MCF 10A (cell line): ENCODE measurements at regions of chr20 and their contacts with region 1.

Region 1: DNA sequence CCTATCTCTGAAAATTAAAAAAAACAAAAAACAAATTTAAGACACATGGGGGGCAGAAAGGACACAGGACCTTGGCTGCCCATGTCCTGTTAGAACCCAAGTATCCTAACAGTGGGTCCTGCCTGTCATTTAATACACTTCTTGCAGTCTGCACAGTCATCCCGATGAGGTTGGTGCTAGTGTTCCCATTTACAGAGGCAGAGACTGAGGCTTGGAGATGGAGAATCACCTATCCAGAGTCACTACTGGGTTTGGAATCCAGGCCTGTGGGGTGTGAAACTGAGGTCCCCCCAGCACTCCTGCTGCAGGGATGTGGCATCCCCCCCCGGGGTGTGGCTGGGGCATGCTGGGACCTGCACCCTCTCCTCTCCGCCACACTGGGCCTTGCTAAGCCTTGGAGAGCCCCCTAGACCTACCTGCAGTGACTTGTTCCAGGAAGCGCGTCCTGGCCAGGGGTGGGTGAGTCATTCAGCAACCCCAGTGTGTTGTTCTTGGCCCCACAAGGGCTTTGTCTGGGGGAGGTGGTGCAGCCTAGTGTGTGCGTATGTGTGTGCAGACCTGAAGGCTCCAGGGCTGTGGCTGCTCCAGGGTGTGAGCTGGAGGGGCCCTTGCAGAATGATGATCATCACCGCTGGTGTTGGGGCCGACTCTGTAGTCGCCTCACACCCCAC is 49.7 kb downstream of the BCAS4 start:
- DNase-seq: peak; percentile 98
- H3K4me3 Mint-ChIP-seq: no peak overlapping the region
- H3K27ac Mint-ChIP-seq: peak overlapping the region; percentile 16
- H3K4me1 Mint-ChIP-seq: peaks cover 36% of the 10 kb centered on the region
- H3K27me3 Mint-ChIP-seq: no peaks in the 10 kb centered on the region
- CTCF ChIP-seq: no peak

Region 2: DNA sequence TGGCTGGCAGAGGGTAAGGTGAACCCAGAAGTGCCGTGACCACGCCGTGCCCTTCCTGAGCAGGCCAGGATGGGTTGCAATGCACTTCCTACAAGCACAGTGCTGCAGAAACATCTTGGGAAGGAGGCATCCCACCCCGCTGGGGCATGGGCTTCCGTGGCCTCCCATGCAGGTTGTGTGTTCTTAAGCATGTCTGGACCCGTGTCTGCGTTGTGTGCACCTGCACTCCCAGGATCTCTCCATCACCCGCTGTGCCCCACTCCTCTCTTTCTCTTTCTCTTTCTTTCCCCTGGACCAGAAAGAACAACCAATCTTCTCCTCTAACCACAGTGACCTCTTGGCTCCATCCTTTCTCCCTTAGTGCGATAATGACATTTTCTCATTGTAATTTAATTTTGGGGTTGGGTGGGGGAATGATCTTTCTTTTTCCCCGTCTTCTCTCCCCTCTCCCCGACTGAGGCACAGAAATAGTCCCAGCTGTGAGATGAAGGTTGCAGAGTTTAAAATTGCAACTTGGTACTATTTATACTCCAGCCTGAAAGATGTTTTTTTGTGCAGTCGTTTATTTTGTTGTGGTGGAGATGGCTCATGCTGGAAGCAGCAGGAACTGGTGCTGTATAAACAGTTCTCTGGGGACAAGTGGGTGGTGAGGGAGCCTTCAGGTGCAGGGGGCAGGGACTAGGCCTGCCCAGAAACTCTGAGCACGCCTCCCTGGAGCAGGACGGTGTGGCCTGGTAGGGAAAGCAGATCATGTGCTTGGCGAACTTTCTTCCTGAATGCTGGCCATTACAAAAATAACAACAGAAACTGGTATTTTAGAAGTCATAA is 29.2 kb before region 1 on chr20:
- CTCF ChIA-PET with region 1: interaction called, 15 read pairs
- POLR2A ChIA-PET with region 1: interaction called, 13 read pairs
- intact Hi-C with region 1: no loop called
- DNase-seq: no peak
- H3K4me3 Mint-ChIP-seq: no peak overlapping the region
- H3K27ac Mint-ChIP-seq: peak overlapping the region; percentile 52
- H3K4me1 Mint-ChIP-seq: peaks cover 16% of the 10 kb centered on the region
- H3K27me3 Mint-ChIP-seq: no peaks in the 10 kb centered on the region
- CTCF ChIP-seq: no peak

Region 3: DNA sequence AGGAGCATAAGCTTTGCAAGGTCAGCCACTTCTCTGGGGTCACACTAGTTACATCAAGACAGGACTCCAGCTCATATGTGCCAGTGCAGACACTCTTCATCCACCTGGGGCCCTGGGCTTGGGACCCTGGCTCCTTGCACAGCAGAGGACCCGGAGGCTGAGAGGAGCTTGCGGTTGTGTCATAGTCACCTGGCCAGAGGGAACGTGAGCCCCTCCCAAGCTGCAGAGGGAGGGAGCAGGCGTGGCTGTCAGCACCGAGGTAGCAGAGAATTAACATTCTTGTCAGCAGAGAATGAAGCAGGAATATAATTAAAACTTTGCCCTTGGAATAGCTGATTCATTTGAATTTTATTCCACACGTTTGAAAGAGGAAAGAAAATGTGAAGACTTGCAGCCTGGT is 12.9 kb before region 1 on chr20:
- CTCF ChIA-PET with region 1: interaction called, 5 read pairs
- POLR2A ChIA-PET with region 1: interaction called, 89 read pairs
- intact Hi-C with region 1: no loop called
- DNase-seq: no peak
- H3K4me3 Mint-ChIP-seq: no peak overlapping the region
- H3K27ac Mint-ChIP-seq: no peak overlapping the region
- H3K4me1 Mint-ChIP-seq: peaks cover 9% of the 10 kb centered on the region
- H3K27me3 Mint-ChIP-seq: no peaks in the 10 kb centered on the region
- CTCF ChIP-seq: no peak

Region 4: GRCh38 chr20:50868509-50869495 is 24.2 kb after region 1 on chr20:
- CTCF ChIA-PET with region 1: interaction called, 8 read pairs
- POLR2A ChIA-PET with region 1: interaction called, 18 read pairs
- intact Hi-C with region 1: no loop called
- DNase-seq: no peak
- H3K4me3 Mint-ChIP-seq: no peak overlapping the region
- H3K27ac Mint-ChIP-seq: no peak overlapping the region
- H3K4me1 Mint-ChIP-seq: peaks cover 19% of the 10 kb centered on the region
- H3K27me3 Mint-ChIP-seq: no peaks in the 10 kb centered on the region
- CTCF ChIP-seq: no peak

Region 5: GRCh38 chr20:50919567-50919966 is 75.0 kb after region 1 on chr20:
- CTCF ChIA-PET with region 1: interaction called, 4 read pairs
- POLR2A ChIA-PET with region 1: interaction called, 149 read pairs
- intact Hi-C with region 1: no loop called
- DNase-seq: peak; percentile 96
- H3K4me3 Mint-ChIP-seq: peak overlapping the region; percentile 55
- H3K27ac Mint-ChIP-seq: peak overlapping the region; percentile 94
- H3K4me1 Mint-ChIP-seq: peaks cover 37% of the 10 kb centered on the region
- H3K27me3 Mint-ChIP-seq: no peaks in the 10 kb centered on the region
- CTCF ChIP-seq: no peak